ENCODE measurements at regions of chr9 and their contacts with region 1.

Region 1: GRCh38 chr9:129869585-129870501 is 34.6 kb downstream of the USP20 start:
- DNase-seq: no peak
- H3K27ac ChIP-seq: no peak overlapping the region
- CTCF ChIP-seq: no peak

Region 2: DNA sequence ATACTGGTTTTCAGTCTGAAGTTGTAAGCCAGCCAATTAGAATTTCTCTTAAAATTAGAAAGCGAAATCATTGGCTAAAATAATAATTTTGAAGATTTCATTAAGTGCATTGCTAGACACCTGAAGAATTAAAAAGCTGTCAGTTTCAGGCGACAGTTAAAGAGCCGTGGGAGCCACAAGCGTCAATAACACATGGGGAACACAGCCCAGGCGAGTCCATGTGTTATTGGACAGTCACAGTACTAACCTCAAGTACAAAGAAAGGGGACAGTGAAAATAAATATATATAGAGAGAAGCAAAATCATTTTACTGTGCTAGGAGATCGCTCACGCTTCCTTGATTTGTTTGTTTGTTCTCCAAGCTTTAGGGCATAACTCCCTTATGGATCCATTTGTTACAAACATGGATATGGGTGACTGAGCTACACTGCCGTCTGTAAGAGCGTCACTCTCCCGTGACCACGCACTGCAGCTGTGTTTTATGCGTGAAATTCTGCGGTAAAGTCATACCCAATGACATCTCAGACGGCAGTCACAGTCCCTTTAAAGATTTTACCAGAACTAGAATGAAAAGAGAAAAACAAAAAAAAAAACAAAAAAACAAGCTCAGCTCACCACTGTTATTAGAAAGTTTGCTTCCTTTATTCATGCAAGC is 48.6 kb after region 1 on chr9:
- CTCF ChIA-PET with region 1: interaction called, 10 read pairs
- POLR2A ChIA-PET with region 1: no interaction called
- DNase-seq: no peak
- H3K27ac ChIP-seq: no peak overlapping the region
- CTCF ChIP-seq: no peak